ENCODE measurements at regions of chr1 and their contacts with region 1.

Region 1: GRCh38 chr1:51519048-51519864 is at the start of gene EPS15:
- DNase-seq: peak; percentile 91 to 92
- ATAC-seq: peak; percentile 80 to 92 (median 88)
- H3K4me3 ChIP-seq: peak within 1 kb of the TSS; percentile 72 to 98 (median 78)
- H3K27ac ChIP-seq: peak within 1 kb of the TSS; percentile 88 to 96 (median 92)
- H3K4me1 ChIP-seq: peaks cover 0 to 58% (median 36%) of the 10 kb centered on the region in 9 donors
- H3K27me3 ChIP-seq: no peaks in the 10 kb centered on the region
- CTCF ChIP-seq: no peak
- total RNA-seq, gene EPS15: 52.9 to 81.4 (median 63.9) TPM

Region 2: DNA sequence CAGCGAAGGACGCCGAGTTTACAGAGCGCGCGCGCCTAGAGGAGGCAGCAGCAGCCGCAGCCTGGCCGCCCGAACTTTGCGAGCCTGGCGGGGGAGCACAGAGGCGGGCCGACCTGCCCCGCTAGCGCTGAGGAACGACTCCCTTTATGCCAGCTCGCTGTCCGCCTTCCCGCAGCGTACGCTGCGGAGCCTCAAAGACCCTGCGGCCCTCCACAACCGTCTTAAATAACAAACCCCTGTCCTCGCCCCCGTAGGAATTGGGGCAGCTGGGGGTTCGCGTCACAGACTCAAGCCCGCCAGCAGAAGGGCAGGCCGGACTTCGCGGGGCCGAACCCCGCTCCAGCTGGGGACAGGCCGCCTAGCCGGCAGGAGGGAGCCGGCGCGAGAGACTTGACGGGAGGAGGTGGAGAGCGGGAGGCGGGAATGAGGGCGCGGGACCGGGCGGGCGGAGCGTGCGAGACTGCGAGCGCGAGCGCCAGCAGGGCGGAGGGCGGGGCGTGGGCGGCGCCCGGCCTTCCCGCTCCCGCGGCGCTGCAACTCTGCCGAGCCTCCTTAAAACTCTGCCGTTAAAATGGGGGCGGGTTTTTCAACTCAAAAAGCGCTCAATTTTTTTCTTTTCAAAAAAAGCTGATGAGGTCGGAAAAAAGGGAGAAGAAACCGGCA is 551.0 kb before region 1 on chr1:
- intact Hi-C with region 1: loop called in 1 of 10 experiments (anchors 10 kb)
- DNase-seq: peak; percentile 93 to 94
- ATAC-seq: peak; percentile 94 to 97 (median 96)
- H3K4me3 ChIP-seq: peak overlapping the region; percentile 70 to 95 (median 82)
- H3K27ac ChIP-seq: peak overlapping the region; percentile 95 to 99 (median 97)
- H3K4me1 ChIP-seq: peaks cover 0 to 42% (median 19%) of the 10 kb centered on the region in 9 donors
- H3K27me3 ChIP-seq: no peaks in the 10 kb centered on the region
- CTCF ChIP-seq: peak in 8 of 9 donors; percentile 22 to 63 (median 43)

Region 3: DNA sequence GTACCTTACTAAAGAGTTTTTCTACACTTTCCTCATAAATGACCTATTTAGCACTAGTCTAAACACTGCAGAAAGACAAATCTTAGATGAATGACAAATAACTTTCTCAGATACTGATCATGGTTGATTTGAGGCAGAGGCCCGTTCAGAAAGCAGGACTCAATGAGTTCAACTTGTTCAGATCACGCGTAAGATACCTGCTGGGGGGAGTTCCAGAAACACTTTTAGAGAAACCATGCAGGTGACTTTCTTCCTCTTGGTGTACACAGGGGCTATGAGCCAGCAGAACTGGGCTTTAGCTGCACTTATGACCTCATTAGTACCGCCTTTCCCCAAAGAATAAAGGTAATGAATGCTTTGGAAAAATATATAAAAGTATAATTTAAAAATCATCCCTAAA is 150.1 kb before region 1 on chr1:
- intact Hi-C with region 1: no loop called
- DNase-seq: no peak
- ATAC-seq: no peak
- H3K4me3 ChIP-seq: no peak overlapping the region
- H3K27ac ChIP-seq: no peak overlapping the region
- H3K4me1 ChIP-seq: no peaks in the 10 kb centered on the region
- H3K27me3 ChIP-seq: no peaks in the 10 kb centered on the region
- CTCF ChIP-seq: no peak

Region 4: GRCh38 chr1:51421964-51422363 is 97.3 kb before region 1 on chr1:
- intact Hi-C with region 1: loop called in 8 of 10 experiments (anchors 1 to 10 kb)
- DNase-seq: no peak
- ATAC-seq: peak in 7 of 8 donors; percentile 59 to 87 (median 76)
- H3K4me3 ChIP-seq: peak overlapping the region in 5 of 10 donors; percentile 28 to 48 (median 31)
- H3K27ac ChIP-seq: peak overlapping the region in 7 of 10 donors; percentile 62 to 84 (median 75)
- H3K4me1 ChIP-seq: peaks cover 0 to 78% (median 36%) of the 10 kb centered on the region in 9 donors
- H3K27me3 ChIP-seq: no peaks in the 10 kb centered on the region
- CTCF ChIP-seq: no peak

Region 5: DNA sequence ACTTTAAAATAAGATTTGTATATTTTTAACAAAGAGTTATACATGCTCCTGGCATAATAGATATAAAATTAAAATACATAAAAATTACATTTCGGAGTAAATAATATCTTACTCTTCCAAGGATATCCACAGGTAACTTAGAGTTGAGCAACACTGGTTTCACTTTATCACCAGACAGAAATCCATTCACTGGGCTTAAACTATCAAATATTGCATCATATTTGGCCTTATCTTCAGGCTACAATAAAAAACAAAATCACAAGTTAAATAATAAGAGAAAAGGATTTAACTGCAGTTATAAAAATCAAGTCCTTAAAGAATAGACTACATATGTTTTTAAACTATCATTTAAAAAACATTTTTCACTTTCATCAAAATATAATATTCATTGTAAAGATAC is 55.7 kb before region 1 on chr1:
- intact Hi-C with region 1: loop called in 1 of 10 experiments (anchors 2 kb)
- DNase-seq: no peak
- ATAC-seq: no peak
- H3K4me3 ChIP-seq: no peak overlapping the region
- H3K27ac ChIP-seq: no peak overlapping the region
- H3K4me1 ChIP-seq: no peaks in the 10 kb centered on the region
- H3K27me3 ChIP-seq: no peaks in the 10 kb centered on the region
- CTCF ChIP-seq: no peak

Region 6: GRCh38 chr1:51472359-51472758 is 46.9 kb before region 1 on chr1:
- intact Hi-C with region 1: loop called in 1 of 10 experiments (anchors 5 kb)
- DNase-seq: peak in 1 of 2 donors; percentile 22
- ATAC-seq: peak; percentile 50 to 89 (median 78)
- H3K4me3 ChIP-seq: no peak overlapping the region
- H3K27ac ChIP-seq: peak overlapping the region in 7 of 10 donors; percentile 3 to 48 (median 39)
- H3K4me1 ChIP-seq: peaks cover 0 to 42% (median 29%) of the 10 kb centered on the region in 9 donors
- H3K27me3 ChIP-seq: no peaks in the 10 kb centered on the region
- CTCF ChIP-seq: no peak

Measured in heart right ventricle (tissue), 16 donors.